ENCODE measurements at regions of chr3 and their contacts with region 1.

Region 1: DNA sequence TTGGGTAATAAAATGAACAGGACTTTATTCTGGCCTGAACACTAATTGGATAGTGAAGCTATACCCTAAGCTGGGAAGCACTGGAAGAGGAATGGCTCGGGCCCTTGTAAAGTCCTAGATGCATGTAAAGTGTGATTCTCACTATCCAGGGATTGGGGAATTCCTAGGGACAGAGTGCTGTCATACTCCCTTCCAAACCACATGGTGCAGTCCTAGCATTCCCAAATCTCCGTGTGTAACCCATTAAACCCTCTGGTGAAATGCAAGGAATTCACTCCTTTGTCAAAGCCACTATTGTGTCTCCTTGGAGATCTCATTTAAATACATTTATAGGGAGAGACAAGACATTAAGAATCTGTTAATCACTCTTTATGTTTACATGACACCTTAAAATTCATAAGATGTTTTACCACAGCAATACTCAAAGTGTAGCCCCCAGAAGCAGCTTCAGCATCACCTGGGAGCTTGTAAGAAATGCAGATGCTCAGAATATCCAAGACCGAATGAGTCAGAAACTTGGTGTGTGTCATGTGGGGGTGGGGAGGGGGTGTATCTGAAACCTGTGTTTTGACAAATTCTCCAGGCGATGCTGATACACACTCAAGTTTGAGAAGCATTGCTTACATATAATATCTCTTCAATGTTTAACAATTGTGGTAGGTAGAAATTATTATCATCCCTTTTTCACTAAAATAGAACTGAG is 121.8 kb upstream of the NPHP3 start:
- DNase-seq: no peak
- H3K4me3 ChIP-seq: no peak overlapping the region
- H3K27ac ChIP-seq: no peak overlapping the region
- H3K4me1 ChIP-seq: no peaks in the 10 kb centered on the region
- H3K27me3 ChIP-seq: no peaks in the 10 kb centered on the region
- CTCF ChIP-seq: no peak
- POLR2A ChIP-seq: no peak

Region 2: GRCh38 chr3:131193641-131194238 is 1650.3 kb before region 1 on chr3:
- intact Hi-C with region 1: loop called (anchors 10 kb)
- DNase-seq: no peak
- H3K4me3 ChIP-seq: no peak overlapping the region
- H3K27ac ChIP-seq: no peak overlapping the region
- H3K4me1 ChIP-seq: no peaks in the 10 kb centered on the region
- H3K27me3 ChIP-seq: no peaks in the 10 kb centered on the region
- CTCF ChIP-seq: no peak
- POLR2A ChIP-seq: no peak

Measured in testis (tissue), 5 donors.